ENCODE measurements at regions of chr1 and their contacts with region 1.

Region 1: DNA sequence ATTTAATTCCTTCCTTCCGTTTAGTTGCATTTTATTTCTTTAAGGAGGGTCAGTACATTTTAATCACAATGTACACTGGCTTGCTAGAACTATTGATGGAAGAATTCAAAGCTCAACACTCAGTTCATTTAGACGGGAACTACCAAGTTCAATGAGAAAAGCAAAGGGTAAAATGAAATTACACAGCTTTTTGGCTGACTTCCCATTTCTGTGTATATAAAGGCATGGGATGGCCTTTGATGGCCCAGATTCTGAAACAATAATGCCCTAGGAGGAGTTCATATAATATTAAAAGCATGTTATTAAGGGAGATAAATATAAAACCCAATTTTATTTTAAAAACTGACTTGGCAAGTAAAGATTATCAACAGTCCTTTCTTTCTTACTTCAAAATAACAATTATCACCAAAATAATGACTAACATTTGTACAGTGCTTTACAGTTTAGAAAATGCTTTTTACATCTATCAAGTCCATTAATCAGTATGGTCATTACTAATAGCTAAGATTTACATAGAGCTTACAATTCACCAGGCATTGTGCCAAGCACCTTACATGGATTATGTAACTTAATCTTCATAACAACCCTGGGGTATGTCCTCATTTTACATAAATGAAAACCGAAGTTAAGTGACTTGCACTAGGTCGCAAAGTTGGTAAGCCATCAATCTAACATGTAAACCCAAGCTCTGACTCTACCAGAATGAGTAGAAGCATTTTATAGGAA is 402.4 kb downstream of the OMA1 start:
- DNase-seq: no peak
- ATAC-seq: no peak
- H3K4me3 ChIP-seq: no peak overlapping the region
- H3K4me3 Mint-ChIP-seq: no peak overlapping the region
- H3K27ac ChIP-seq: no peak overlapping the region
- H3K27ac Mint-ChIP-seq: no peak overlapping the region
- H3K4me1 ChIP-seq: no peaks in the 10 kb centered on the region
- H3K4me1 Mint-ChIP-seq: no peaks in the 10 kb centered on the region
- H3K27me3 ChIP-seq: no peaks in the 10 kb centered on the region
- H3K27me3 Mint-ChIP-seq: no peaks in the 10 kb centered on the region
- CTCF ChIP-seq: no peak

Region 2: GRCh38 chr1:58123051-58123450 is 21.1 kb before region 1 on chr1:
- CTCF ChIA-PET with region 1: no interaction called
- POLR2A ChIA-PET with region 1: no interaction called
- intact Hi-C with region 1: no loop called
- DNase-seq: no peak
- ATAC-seq: no peak
- H3K4me3 ChIP-seq: no peak overlapping the region
- H3K4me3 Mint-ChIP-seq: no peak overlapping the region
- H3K27ac ChIP-seq: no peak overlapping the region
- H3K27ac Mint-ChIP-seq: no peak overlapping the region
- H3K4me1 ChIP-seq: no peaks in the 10 kb centered on the region
- H3K4me1 Mint-ChIP-seq: peaks cover 4% of the 10 kb centered on the region
- H3K27me3 ChIP-seq: no peaks in the 10 kb centered on the region
- H3K27me3 Mint-ChIP-seq: no peaks in the 10 kb centered on the region
- CTCF ChIP-seq: no peak

Region 3: GRCh38 chr1:58561633-58562032 is 417.5 kb after region 1 on chr1:
- CTCF ChIA-PET with region 1: no interaction called
- POLR2A ChIA-PET with region 1: no interaction called
- intact Hi-C with region 1: loop called in 1 of 2 experiments (anchors 5 kb)
- DNase-seq: no peak
- ATAC-seq: no peak
- H3K4me3 ChIP-seq: no peak overlapping the region
- H3K4me3 Mint-ChIP-seq: no peak overlapping the region
- H3K27ac ChIP-seq: no peak overlapping the region
- H3K27ac Mint-ChIP-seq: no peak overlapping the region
- H3K4me1 ChIP-seq: no peaks in the 10 kb centered on the region
- H3K4me1 Mint-ChIP-seq: no peaks in the 10 kb centered on the region
- H3K27me3 ChIP-seq: peaks cover 0 to 2% of the 10 kb centered on the region in 2 experiments
- H3K27me3 Mint-ChIP-seq: peaks cover 31% of the 10 kb centered on the region
- CTCF ChIP-seq: no peak

Measured in CD8-positive, alpha-beta T cell (primary cell).